ENCODE measurements at regions of chr1 and their contacts with region 1.

Region 1: GRCh38 chr1:204431310-204432165 is 19.9 kb upstream of the PPP1R15B start:
- DNase-seq: peak; percentile 75
- H3K4me3 ChIP-seq: no peak overlapping the region
- H3K27ac ChIP-seq: no peak overlapping the region
- H3K4me1 ChIP-seq: peaks cover 12% of the 10 kb centered on the region
- H3K27me3 ChIP-seq: no peaks in the 10 kb centered on the region
- CTCF ChIP-seq: peak; percentile 89 to 90
- POLR2A ChIP-seq: no peak

Region 2: GRCh38 chr1:204411451-204412204 is 19.9 kb before region 1 on chr1 and contains the start of gene PPP1R15B:
- CTCF ChIA-PET with region 1: interaction called, 46 read pairs
- POLR2A ChIA-PET with region 1: no interaction called
- dilution Hi-C with region 1: no loop called
- intact Hi-C with region 1: loop called (anchors 1 kb)
- DNase-seq: peak; percentile 99
- H3K4me3 ChIP-seq: peak within 1 kb of the TSS; percentile 49 to 94 (median 78)
- H3K27ac ChIP-seq: peak within 1 kb of the TSS; percentile 89
- H3K4me1 ChIP-seq: peaks cover 6% of the 10 kb centered on the region
- H3K27me3 ChIP-seq: no peaks in the 10 kb centered on the region
- CTCF ChIP-seq: no peak
- POLR2A ChIP-seq: peak; percentile 96
- total RNA-seq, gene PPP1R15B: 39.8 and 41.7 TPM in 2 replicates

Region 3: DNA sequence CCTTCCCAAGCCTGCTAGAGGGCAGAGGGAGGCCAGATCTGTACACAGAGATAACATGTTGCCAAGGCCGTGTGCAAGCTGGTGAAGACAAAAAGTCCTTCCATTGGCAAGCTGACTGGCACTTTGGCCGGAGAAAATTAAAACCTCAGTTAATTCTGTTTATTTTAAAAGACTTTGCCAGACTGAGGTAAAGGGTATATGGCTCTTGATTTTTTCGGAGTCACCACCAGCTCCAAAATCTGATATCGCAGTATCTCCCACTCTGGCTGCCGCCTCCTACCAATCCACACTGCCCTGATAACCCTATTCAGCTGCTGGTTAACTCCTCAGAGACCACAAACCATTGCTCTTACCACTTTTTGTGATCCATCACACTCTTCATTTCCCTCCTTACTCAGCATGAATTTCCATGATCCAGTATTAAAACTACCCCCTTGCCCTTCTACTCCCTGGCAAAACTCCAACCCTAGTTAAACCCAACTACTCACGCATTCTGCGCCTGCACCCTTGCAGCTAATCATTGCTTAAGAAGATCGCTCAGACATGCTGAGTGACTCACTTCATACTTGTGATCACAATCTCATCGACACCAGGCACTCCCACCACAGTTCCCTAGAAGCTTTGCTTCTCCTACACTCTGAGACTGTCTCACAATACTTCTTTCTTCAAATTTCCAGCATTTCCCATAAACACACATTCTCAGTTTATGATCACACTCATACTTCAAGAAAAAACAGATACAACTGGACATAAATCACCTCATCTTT is 14.1 kb before region 1 on chr1:
- CTCF ChIA-PET with region 1: interaction called, 46 read pairs
- POLR2A ChIA-PET with region 1: no interaction called
- dilution Hi-C with region 1: no loop called
- intact Hi-C with region 1: loop called (anchors 1 kb)
- DNase-seq: peak; percentile 95
- H3K4me3 ChIP-seq: peak overlapping the region in 1 of 3 experiments; percentile 31
- H3K27ac ChIP-seq: peak overlapping the region; percentile 84
- H3K4me1 ChIP-seq: peaks cover 26% of the 10 kb centered on the region
- H3K27me3 ChIP-seq: no peaks in the 10 kb centered on the region
- CTCF ChIP-seq: no peak
- POLR2A ChIP-seq: no peak

Region 4: GRCh38 chr1:204494281-204495077 is 62.9 kb after region 1 on chr1 and contains the start of gene PIK3C2B:
- CTCF ChIA-PET with region 1: interaction called, 1,267 read pairs
- POLR2A ChIA-PET with region 1: interaction called, 3 read pairs
- dilution Hi-C with region 1: no loop called
- intact Hi-C with region 1: loop called (anchors 2 kb)
- DNase-seq: peak; percentile 88
- H3K4me3 ChIP-seq: peak within 1 kb of the TSS; percentile 56 to 85 (median 64)
- H3K27ac ChIP-seq: peak within 1 kb of the TSS; percentile 63
- H3K4me1 ChIP-seq: peaks cover 18% of the 10 kb centered on the region
- H3K27me3 ChIP-seq: no peaks in the 10 kb centered on the region
- CTCF ChIP-seq: peak; percentile 49 to 64
- POLR2A ChIP-seq: peak; percentile 82
- total RNA-seq, gene PIK3C2B: 41.8 and 49.0 TPM in 2 replicates